AG04450 (cell line): ENCODE measurements at regions of chr2 and their contacts with region 1.

Region 1: GRCh38 chr2:31274401-31275075 is 40.6 kb downstream of the EHD3 start:
- DNase-seq: peak; percentile 62
- H3K4me3 ChIP-seq: no peak overlapping the region
- H3K27ac ChIP-seq: peak overlapping the region; percentile 42
- H3K27me3 ChIP-seq: peaks cover 6% of the 10 kb centered on the region
- CTCF ChIP-seq: no peak

Region 2: DNA sequence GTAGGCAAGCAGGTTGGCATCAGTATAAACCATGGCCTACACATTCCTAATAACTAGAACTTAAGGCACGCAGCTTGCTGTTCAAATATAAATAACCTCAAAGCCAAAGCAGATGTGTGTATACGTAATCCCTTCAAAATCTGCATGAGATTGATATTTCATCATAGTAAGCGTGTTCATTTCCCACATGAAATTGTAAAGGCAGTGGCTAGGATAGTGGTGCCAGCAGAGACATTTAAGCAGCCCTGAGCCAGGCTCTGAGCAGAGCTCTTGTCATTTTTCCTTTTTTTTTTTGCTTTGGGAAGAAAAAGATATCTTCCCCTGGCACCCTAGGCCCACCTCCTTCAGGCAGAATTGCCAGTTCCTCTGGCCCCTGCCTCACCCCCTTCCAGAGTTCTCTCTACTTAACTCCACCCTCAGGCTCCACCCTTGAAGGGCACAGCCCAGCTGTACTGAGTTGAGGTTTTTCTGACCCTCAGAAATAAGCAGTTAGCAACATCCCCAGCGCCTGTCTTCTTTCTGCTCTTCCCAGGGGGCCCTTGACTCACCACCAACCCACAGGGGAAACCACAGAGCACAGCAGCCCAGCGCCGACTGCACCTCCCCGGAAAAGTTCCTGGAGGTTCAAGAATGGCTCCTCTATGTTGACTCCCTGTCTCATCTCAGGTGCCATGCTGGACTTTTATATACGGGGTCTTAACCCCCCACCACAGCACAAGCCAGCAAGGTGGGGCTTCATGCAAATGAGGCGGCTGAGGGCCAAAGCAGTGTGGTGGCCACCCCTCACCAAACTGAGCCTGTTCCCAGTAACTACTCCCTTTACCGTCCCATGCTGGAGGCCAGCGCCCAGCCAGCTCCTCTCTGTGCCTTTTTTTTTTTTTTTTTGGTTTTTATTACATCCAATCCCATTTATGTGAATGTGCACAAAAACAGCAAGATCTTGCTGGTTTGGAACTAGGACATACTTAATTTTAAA is 44.1 kb after region 1 on chr2:
- CTCF ChIA-PET with region 1: interaction called, 4 read pairs
- POLR2A ChIA-PET with region 1: interaction called, 33 read pairs
- DNase-seq: peak; percentile 60
- H3K4me3 ChIP-seq: peak overlapping the region; percentile 12; the same call in 1 of the 2 replicates
- H3K27ac ChIP-seq: peak overlapping the region; percentile 96
- H3K27me3 ChIP-seq: no peaks in the 10 kb centered on the region
- CTCF ChIP-seq: no peak